Transverse colon (tissue), 4 donors: ENCODE measurements at regions of chr10 and their contacts with region 1.

Region 1: DNA sequence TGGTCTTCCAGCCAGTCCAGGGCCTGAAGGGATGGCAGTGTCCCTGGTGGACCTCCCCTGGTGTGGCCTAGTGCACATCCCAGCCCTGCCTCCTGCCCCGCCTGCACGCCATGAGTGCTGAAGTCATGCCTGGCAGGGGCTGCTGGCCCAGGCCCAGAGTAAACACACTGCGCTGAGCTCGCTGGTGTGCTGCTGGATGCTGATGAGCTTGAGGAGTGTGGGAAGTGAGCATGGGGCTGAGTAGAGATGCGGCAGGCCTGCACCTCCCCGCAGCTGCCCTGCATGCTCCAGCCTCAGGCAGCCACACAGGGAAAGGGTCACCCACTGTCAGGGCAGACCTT is 43.2 kb downstream of the HTRA1 start:
- DNase-seq: peak; percentile 79
- H3K4me3 ChIP-seq: no peak overlapping the region
- H3K27ac ChIP-seq: peak overlapping the region; percentile 46 to 73 (median 63)
- H3K4me1 ChIP-seq: peaks cover 11 to 19% (median 17%) of the 10 kb centered on the region in 4 donors
- H3K27me3 ChIP-seq: no peaks in the 10 kb centered on the region
- CTCF ChIP-seq: no peak
- EP300 ChIP-seq: no peak
- POLR2A ChIP-seq: no peak

Region 2: DNA sequence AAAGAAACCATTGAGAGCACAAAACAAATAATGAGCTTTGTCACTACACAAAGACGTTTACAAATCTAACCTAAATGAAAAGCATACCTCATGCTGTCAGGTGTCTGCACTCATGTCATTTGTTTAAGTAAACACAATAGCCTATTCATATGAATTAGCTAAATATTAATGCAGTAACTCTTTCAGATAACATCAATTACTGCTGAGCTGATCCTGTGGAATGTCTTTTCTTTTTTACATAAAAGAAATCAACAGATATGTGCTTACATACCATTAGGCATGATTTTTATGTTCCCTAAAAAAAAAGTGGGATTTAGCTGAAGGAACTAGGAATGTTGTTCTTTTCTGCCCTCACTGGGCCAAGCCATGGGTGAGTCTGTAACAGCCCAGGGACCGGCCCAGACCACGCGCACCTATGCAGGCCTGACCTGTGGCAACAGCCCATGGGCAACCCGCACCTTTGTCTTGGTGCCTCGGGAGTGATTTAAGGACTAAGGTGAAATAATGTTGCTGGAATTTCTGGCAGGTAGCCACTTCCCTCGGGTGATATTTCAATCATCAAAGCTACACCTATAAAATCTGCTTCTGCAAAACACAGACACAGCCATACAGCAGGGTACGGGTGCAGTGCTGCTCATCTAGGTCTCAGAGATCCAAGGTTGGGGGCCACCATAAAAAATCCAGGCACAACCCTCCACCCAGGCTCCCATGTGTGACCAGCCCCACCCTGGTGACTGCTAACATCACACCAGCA is 950.9 kb before region 1 on chr10:
- in situ Hi-C with region 1: no loop called
- intact Hi-C with region 1: no loop called
- DNase-seq: peak; percentile 37
- H3K4me3 ChIP-seq: no peak overlapping the region
- H3K27ac ChIP-seq: peak overlapping the region in 2 of 4 donors; percentile 4 to 30
- H3K4me1 ChIP-seq: peaks cover 6 to 32% (median 9%) of the 10 kb centered on the region in 4 donors
- H3K27me3 ChIP-seq: no peaks in the 10 kb centered on the region
- CTCF ChIP-seq: no peak
- EP300 ChIP-seq: no peak
- POLR2A ChIP-seq: no peak

Region 3: GRCh38 chr10:122459561-122460273 is 44.9 kb before region 1 on chr10:
- in situ Hi-C with region 1: no loop called
- intact Hi-C with region 1: loop called (anchors 5 kb)
- DNase-seq: no peak
- H3K4me3 ChIP-seq: no peak overlapping the region
- H3K27ac ChIP-seq: no peak overlapping the region
- H3K4me1 ChIP-seq: peaks cover 0 to 29% (median 19%) of the 10 kb centered on the region in 4 donors
- H3K27me3 ChIP-seq: peaks cover 66% of the 10 kb centered on the region
- CTCF ChIP-seq: no peak
- EP300 ChIP-seq: no peak
- POLR2A ChIP-seq: no peak